Common myeloid progenitor, CD34-positive (primary cell): ENCODE measurements at regions of chr11 and their contacts with region 1.

Region 1: GRCh38 chr11:76318744-76319384 is 62.1 kb downstream of the THAP12 start:
- DNase-seq: peak; percentile 76 to 86 (median 83)
- H3K4me3 ChIP-seq: no peak overlapping the region
- H3K27ac ChIP-seq: no peak overlapping the region
- H3K4me1 ChIP-seq: peaks cover 0 to 16% (median 10%) of the 10 kb centered on the region in 4 experiments
- H3K27me3 ChIP-seq: peaks cover 0 to 12% (median 5%) of the 10 kb centered on the region in 5 experiments

Region 2: DNA sequence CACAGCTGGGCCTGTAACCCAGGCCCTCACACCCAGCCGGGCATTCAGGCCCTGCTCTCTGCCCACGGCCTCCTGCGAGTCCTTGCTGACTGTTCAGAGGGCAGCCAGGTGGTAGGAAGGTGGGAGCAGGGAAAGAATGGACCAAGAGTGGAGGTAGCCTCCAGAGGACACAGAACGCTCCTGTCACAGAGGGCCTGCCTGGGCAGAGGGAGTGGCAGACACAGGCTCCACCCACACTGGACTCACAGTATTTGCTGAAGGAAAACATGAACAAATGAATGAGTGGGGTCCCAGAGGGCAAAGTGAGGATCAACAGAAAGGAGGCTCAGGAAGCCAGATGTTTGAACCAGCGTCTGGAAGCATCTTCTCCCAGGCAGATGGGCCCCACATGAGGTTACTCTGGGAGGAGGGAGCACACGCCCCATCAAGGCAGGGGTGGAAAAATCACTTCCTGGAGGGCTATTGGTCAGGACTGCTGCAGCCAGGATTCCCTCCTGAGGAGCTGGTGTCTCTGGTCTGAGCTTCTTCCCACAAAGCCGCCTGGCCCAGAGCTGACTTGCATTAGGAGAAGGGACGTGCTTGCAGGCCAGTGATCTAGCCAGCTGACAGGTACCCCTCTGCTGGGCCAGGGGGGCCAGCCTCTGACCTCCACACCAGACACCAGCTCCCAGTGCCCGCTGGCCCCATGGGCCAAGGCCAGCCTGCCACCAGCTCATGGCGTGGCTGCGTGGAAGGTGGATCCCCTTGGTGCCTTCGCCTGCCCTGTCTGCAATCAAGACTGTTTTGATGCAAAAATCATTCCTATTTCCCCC is 21.9 kb before region 1 on chr11:
- CTCF ChIA-PET with region 1: interaction called, 16 read pairs
- POLR2A ChIA-PET with region 1: no interaction called
- DNase-seq: no peak
- H3K4me3 ChIP-seq: no peak overlapping the region
- H3K27ac ChIP-seq: no peak overlapping the region
- H3K4me1 ChIP-seq: peaks cover 0 to 11% (median 9%) of the 10 kb centered on the region in 4 experiments
- H3K27me3 ChIP-seq: peaks cover 0 to 3% (median 0%) of the 10 kb centered on the region in 5 experiments

Region 3: GRCh38 chr11:76307396-76307795 is 11.5 kb before region 1 on chr11:
- CTCF ChIA-PET with region 1: interaction called, 15 read pairs
- POLR2A ChIA-PET with region 1: no interaction called
- DNase-seq: no peak
- H3K4me3 ChIP-seq: no peak overlapping the region
- H3K27ac ChIP-seq: no peak overlapping the region
- H3K4me1 ChIP-seq: peaks cover 0 to 3% (median 0%) of the 10 kb centered on the region in 4 experiments
- H3K27me3 ChIP-seq: no peaks in the 10 kb centered on the region